Sigmoid colon (tissue), 7 donors: ENCODE measurements at regions of chr11 and their contacts with region 1.

Region 1: GRCh38 chr11:95231127-95231880 is at the start of gene SESN3:
- DNase-seq: peak; percentile 99
- H3K4me3 ChIP-seq: peak within 1 kb of the TSS; percentile 61 to 85 (median 72)
- H3K27ac ChIP-seq: peak within 1 kb of the TSS; percentile 75 to 88 (median 80)
- H3K4me1 ChIP-seq: peaks cover 0 to 21% (median 13%) of the 10 kb centered on the region in 4 donors
- H3K27me3 ChIP-seq: peaks cover 0 to 3% (median 0%) of the 10 kb centered on the region in 3 donors
- CTCF ChIP-seq: no peak
- EP300 ChIP-seq: no peak
- POLR2A ChIP-seq: peak; percentile 29 to 41
- total RNA-seq, gene SESN3: 8.7 to 20.8 (median 16.6) TPM

Region 2: GRCh38 chr11:95212609-95213008 is 18.7 kb before region 1 on chr11:
- intact Hi-C with region 1: no loop called
- DNase-seq: no peak
- H3K4me3 ChIP-seq: no peak overlapping the region
- H3K27ac ChIP-seq: no peak overlapping the region
- H3K4me1 ChIP-seq: no peaks in the 10 kb centered on the region
- H3K27me3 ChIP-seq: no peaks in the 10 kb centered on the region
- CTCF ChIP-seq: no peak
- EP300 ChIP-seq: no peak
- POLR2A ChIP-seq: no peak

Region 3: DNA sequence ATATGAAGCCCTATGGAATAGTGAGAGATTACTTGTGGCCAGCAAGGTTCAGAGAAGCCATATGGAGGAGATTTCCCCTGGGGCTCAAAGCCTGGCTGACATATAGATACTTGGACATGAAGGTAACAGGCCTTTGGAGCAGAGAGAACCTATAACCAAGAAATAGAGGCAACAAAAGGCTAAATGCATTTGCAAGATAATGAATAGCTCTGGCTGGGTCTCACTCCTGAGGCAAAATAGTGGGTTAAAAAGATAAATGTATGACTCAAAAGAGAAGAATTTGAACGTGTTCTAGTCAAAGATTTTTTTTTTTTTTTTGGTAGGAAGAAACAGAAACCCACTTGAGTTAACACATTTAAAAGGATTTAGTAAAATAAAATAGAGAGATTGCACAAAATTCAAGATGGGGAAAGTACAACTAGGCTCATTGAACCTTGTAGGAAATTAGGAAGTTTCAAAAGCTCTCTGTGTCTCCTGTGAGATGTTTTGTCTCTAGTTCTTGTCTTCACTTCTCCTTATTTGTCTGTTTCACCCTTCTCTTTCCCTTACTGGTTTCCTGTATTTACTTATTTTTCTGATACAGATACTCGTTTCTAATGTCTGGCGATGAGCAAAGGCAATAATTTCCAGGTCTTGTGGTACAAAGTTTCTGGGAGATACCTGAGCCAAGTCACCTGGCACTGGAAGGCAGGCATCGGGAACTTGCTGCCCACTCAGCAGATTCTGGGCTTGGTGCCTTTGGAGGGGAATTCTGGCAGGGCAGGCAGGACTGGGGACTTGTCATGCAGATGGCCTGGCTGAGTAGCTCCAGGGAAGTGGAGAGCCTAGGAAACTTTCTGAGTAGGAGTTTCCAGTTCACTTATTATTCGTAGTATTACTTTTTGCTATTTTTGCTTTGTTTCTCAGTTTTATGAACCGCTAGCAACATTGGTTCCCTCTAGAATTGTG is 48.9 kb after region 1 on chr11:
- intact Hi-C with region 1: loop called (anchors 5 kb)
- DNase-seq: no peak
- H3K4me3 ChIP-seq: no peak overlapping the region
- H3K27ac ChIP-seq: peak overlapping the region in 1 of 4 donors; percentile 36
- H3K4me1 ChIP-seq: peaks cover 0 to 20% (median 14%) of the 10 kb centered on the region in 4 donors
- H3K27me3 ChIP-seq: no peaks in the 10 kb centered on the region
- CTCF ChIP-seq: no peak
- EP300 ChIP-seq: no peak
- POLR2A ChIP-seq: no peak

Region 4: DNA sequence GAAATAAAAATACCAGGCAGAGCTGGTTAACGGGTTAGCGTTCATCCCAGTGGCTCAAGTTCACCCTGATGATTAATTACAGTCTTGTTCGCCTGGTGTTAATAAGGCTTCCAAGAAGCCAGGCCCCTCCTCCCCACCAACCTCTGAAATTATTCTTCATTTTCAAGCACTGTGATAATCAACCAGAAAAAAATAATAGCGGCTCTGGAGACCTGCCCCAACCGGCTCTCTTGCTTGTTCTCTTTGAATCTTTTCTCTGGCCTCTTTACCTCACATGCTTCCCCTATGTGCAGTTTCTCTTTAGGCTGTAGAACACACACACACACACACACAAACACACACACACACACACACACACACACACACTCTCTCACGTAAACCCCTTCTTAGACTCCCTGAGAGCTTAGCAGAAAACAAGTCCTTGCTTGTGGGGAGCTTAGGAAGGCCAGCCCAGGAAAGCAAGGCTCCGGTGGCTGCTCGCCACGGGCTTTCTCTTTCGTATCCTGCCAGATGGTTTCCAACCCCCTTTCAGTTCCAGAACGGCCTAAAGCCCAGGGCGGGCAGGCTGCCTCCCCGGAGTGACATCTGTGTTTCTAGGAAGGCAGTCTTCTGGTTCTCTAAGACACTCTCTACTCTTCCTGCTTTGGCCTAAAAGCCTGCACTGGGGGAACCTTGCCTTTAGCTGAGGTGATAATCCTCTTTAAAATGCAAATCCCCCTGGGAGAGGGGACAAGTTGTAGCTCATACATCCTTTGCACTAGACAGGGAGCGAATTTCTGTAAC is 106.1 kb after region 1 on chr11:
- intact Hi-C with region 1: loop called (anchors 1 kb)
- DNase-seq: peak; percentile 79
- H3K4me3 ChIP-seq: peak overlapping the region in 2 of 4 donors; percentile 9 to 18
- H3K27ac ChIP-seq: peak overlapping the region; percentile 74 to 87 (median 84)
- H3K4me1 ChIP-seq: peaks cover 0 to 48% (median 38%) of the 10 kb centered on the region in 4 donors
- H3K27me3 ChIP-seq: no peaks in the 10 kb centered on the region
- CTCF ChIP-seq: no peak
- EP300 ChIP-seq: no peak
- POLR2A ChIP-seq: no peak

Region 5: DNA sequence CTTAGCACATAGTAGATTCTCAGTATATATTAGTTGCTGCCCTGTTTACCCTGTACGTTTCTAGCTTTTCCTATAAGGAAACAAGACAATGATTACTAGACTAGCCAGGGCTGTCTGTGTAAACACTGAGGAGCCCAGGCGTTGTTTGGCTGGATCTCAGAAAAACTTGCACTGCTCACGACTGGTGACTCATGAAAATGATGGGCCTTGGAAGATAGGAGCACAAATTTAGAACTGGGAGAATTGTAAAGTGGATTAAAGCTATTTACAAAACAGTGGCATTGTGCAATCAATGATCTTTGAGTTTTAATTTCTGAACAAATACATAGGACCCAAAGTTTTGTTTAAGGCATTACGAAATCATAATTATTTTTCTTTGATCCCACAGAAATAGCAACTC is 281.4 kb after region 1 on chr11:
- intact Hi-C with region 1: loop called (anchors 2 kb)
- DNase-seq: peak; percentile 89
- H3K4me3 ChIP-seq: no peak overlapping the region
- H3K27ac ChIP-seq: peak overlapping the region; percentile 67 to 81 (median 70)
- H3K4me1 ChIP-seq: peaks cover 0 to 29% (median 27%) of the 10 kb centered on the region in 4 donors
- H3K27me3 ChIP-seq: no peaks in the 10 kb centered on the region
- CTCF ChIP-seq: no peak
- EP300 ChIP-seq: no peak
- POLR2A ChIP-seq: no peak

Region 6: DNA sequence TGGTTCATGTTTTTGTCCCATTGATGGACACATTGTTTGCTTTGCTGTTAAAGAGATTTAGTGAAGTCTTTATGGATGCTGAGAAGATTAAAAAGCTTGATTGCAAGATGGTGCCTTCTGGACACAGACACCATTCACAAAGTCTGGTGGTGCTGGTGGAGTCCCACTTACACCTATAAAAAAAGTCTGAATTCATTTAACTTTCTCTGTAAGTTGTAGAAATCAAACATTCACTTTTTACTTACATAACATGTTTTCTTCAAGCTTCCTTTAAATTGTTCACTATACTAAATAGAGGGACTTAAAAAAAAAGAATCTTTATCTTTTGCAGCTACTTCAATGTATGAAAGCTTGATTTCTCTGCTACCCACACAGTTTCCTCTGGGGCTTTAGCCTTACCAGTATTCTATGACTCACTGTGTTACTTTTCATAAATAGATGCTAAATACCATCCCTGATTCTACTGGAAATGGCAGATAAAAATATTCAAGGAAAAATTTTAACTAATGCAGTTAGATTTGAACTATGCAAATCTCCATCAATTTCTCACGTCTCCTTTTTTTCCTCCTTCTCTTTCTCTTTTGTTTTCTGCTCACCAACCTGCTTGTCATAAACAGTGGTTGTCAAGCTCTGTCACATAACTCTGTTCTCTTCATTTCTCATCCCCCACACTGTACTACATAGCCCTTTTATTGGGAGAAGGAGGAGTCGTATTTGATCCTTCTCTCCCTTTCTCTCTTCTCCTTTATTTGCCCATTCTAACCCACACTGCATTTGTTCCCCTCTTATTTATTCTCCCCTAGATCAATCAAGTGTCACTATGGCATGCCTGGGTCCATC is 468.5 kb after region 1 on chr11:
- intact Hi-C with region 1: loop called (anchors 1 kb)
- DNase-seq: no peak
- H3K4me3 ChIP-seq: no peak overlapping the region
- H3K27ac ChIP-seq: no peak overlapping the region
- H3K4me1 ChIP-seq: peaks cover 0 to 31% (median 29%) of the 10 kb centered on the region in 4 donors
- H3K27me3 ChIP-seq: no peaks in the 10 kb centered on the region
- CTCF ChIP-seq: no peak
- EP300 ChIP-seq: no peak
- POLR2A ChIP-seq: no peak